ENCODE measurements at regions of chr10 and their contacts with region 1.

Region 1: DNA sequence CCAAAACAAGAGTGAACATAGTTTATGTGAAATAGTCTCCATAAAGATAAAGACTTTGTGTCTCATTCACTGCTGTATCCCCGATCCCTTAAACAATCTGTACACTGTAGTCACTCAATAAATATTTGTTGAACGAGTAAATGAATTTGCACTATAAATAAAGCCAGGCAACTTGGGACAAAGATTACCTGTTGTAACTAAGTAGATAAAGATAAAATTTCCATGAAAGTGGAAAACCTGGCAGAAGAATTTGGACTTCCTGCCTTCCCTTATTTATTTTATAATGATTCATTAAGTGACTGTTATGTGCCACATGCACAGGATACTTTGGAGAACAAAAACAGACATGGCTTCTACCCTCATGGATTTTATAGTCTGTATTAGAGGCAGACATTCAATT is 277.7 kb upstream of the KAT6B start:
- DNase-seq: peak; percentile 100
- ATAC-seq: peak; percentile 97
- H3K4me3 ChIP-seq: peak overlapping the region; percentile 4; the same call in 1 of the 2 replicates
- H3K27ac ChIP-seq: peak overlapping the region; percentile 66
- H3K4me1 ChIP-seq: peaks cover 21% of the 10 kb centered on the region
- H3K27me3 ChIP-seq: no peaks in the 10 kb centered on the region
- CTCF ChIP-seq: no peak

Region 2: GRCh38 chr10:74432841-74433594 is 115.7 kb before region 1 on chr10:
- CTCF ChIA-PET with region 1: no interaction called
- POLR2A ChIA-PET with region 1: no interaction called
- intact Hi-C with region 1: loop called (anchors 2 kb)
- DNase-seq: peak; percentile 70
- ATAC-seq: peak; percentile 82
- H3K4me3 ChIP-seq: no peak overlapping the region
- H3K27ac ChIP-seq: peak overlapping the region; percentile 46
- H3K4me1 ChIP-seq: peaks cover 29% of the 10 kb centered on the region
- H3K27me3 ChIP-seq: no peaks in the 10 kb centered on the region
- CTCF ChIP-seq: no peak

Region 3: GRCh38 chr10:74502963-74503608 is 45.6 kb before region 1 on chr10:
- CTCF ChIA-PET with region 1: no interaction called
- POLR2A ChIA-PET with region 1: no interaction called
- intact Hi-C with region 1: loop called (anchors 1 kb)
- DNase-seq: peak; percentile 100
- ATAC-seq: peak; percentile 88
- H3K4me3 ChIP-seq: 0 out of 2 replicates have a peak overlapping the region, but pooled peaks have one; percentile 1
- H3K27ac ChIP-seq: peak overlapping the region; percentile 69
- H3K4me1 ChIP-seq: peaks cover 44% of the 10 kb centered on the region
- H3K27me3 ChIP-seq: no peaks in the 10 kb centered on the region
- CTCF ChIP-seq: no peak

Region 4: GRCh38 chr10:74589226-74589673 is 40.6 kb after region 1 on chr10:
- CTCF ChIA-PET with region 1: no interaction called
- POLR2A ChIA-PET with region 1: no interaction called
- intact Hi-C with region 1: no loop called
- DNase-seq: peak; percentile 73
- ATAC-seq: peak; percentile 43
- H3K4me3 ChIP-seq: no peak overlapping the region
- H3K27ac ChIP-seq: no peak overlapping the region
- H3K4me1 ChIP-seq: peaks cover 17% of the 10 kb centered on the region
- H3K27me3 ChIP-seq: no peaks in the 10 kb centered on the region
- CTCF ChIP-seq: no peak

Region 5: GRCh38 chr10:74640134-74640931 is 91.7 kb after region 1 on chr10:
- CTCF ChIA-PET with region 1: no interaction called
- POLR2A ChIA-PET with region 1: no interaction called
- intact Hi-C with region 1: loop called (anchors 2 kb)
- DNase-seq: peak; percentile 48
- ATAC-seq: no peak
- H3K4me3 ChIP-seq: no peak overlapping the region
- H3K27ac ChIP-seq: no peak overlapping the region
- H3K4me1 ChIP-seq: peaks cover 52% of the 10 kb centered on the region
- H3K27me3 ChIP-seq: no peaks in the 10 kb centered on the region
- CTCF ChIP-seq: no peak

Region 6: GRCh38 chr10:74799721-74800221 is 251.1 kb after region 1 on chr10:
- CTCF ChIA-PET with region 1: no interaction called
- POLR2A ChIA-PET with region 1: no interaction called
- intact Hi-C with region 1: loop called (anchors 1 kb)
- DNase-seq: peak; percentile 100
- ATAC-seq: peak; percentile 97
- H3K4me3 ChIP-seq: peak overlapping the region; percentile 3; the same call in 1 of the 2 replicates
- H3K27ac ChIP-seq: peak overlapping the region; percentile 67
- H3K4me1 ChIP-seq: peaks cover 8% of the 10 kb centered on the region
- H3K27me3 ChIP-seq: no peaks in the 10 kb centered on the region
- CTCF ChIP-seq: no peak

Measured in PC-3 (cell line).